ENCODE measurements at regions of chr13 and their contacts with region 1.

Region 1: DNA sequence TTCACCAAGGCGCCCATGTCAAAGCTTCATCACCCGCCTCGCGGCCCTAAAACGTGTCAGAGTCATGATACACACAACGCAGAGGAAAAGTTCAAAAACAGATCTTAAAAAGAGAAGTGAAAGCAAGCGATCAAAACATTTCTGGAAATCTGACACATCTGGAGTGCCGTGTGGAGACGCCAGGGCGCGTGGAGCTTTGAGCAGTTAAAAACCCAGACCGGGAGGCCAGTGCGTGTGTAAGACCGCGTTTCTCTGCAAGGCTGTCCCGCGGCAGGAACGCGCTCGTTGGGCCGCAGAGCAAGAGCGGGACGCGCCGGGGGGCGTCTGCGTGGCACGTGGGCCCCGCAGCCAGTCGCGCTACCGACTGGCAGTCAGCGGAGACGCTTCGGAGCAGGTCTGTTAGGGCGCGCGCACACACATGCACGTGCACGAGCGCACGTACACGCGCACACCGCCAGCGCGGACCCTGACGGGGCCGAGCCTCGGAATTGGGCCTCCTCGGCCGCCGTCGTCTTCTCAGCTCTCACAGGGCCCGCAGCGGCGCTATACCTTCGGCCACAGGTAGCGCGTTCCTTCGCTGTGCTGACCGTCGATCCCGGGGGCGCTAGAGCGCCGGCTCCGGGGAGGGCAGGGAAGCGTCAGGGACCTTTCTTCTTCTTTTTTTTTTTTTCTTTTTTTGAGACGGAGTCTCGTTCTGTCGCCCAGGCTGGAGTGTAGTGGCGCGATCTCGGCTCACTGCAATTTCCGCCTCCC is 35.8 kb downstream of the RNF6 start:
- DNase-seq: peak; percentile 87
- H3K4me3 Mint-ChIP-seq: peak overlapping the region; percentile 84
- H3K27ac Mint-ChIP-seq: peak overlapping the region; percentile 81
- H3K4me1 Mint-ChIP-seq: no peaks in the 10 kb centered on the region
- H3K27me3 Mint-ChIP-seq: no peaks in the 10 kb centered on the region
- CTCF ChIP-seq: no peak

Region 2: DNA sequence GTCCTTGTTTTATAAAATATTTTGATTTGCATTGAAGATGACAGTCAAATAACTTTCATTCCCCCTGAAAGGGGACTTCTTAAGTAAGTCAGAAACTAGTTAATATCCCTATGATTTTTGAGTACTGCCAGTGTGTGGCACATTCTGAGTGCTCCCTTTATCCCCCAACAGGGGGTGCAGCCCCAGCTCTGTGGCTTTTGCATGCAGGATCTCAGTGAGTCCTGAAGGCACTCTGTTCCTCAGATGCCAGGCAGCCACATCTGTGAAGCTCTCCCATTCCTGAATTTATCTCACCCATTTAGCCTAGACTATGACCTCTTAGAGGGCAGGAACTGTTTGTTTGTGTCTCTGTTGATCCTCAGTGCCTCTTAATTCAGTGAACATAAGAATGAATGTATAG is 190.7 kb after region 1 on chr13:
- CTCF ChIA-PET with region 1: no interaction called
- intact Hi-C with region 1: loop called (anchors 10 kb)
- DNase-seq: peak; percentile 2
- H3K4me3 Mint-ChIP-seq: no peak overlapping the region
- H3K27ac Mint-ChIP-seq: no peak overlapping the region
- H3K4me1 Mint-ChIP-seq: no peaks in the 10 kb centered on the region
- H3K27me3 Mint-ChIP-seq: no peaks in the 10 kb centered on the region
- CTCF ChIP-seq: peak; percentile 26

Region 3: GRCh38 chr13:26498656-26499591 is 312.6 kb after region 1 on chr13:
- CTCF ChIA-PET with region 1: interaction called, 29 read pairs
- intact Hi-C with region 1: loop called (anchors 1 kb)
- DNase-seq: peak; percentile 20
- H3K4me3 Mint-ChIP-seq: no peak overlapping the region
- H3K27ac Mint-ChIP-seq: no peak overlapping the region
- H3K4me1 Mint-ChIP-seq: peaks cover 9% of the 10 kb centered on the region
- H3K27me3 Mint-ChIP-seq: peaks cover 12% of the 10 kb centered on the region
- CTCF ChIP-seq: no peak